GM10248 (cell line): ENCODE measurements at regions of chr4 and their contacts with region 1.

Region 1: GRCh38 chr4:1053080-1053661 is 41.7 kb downstream of the FGFRL1 start:
- DNase-seq: no peak
- CTCF ChIP-seq: no peak

Region 2: DNA sequence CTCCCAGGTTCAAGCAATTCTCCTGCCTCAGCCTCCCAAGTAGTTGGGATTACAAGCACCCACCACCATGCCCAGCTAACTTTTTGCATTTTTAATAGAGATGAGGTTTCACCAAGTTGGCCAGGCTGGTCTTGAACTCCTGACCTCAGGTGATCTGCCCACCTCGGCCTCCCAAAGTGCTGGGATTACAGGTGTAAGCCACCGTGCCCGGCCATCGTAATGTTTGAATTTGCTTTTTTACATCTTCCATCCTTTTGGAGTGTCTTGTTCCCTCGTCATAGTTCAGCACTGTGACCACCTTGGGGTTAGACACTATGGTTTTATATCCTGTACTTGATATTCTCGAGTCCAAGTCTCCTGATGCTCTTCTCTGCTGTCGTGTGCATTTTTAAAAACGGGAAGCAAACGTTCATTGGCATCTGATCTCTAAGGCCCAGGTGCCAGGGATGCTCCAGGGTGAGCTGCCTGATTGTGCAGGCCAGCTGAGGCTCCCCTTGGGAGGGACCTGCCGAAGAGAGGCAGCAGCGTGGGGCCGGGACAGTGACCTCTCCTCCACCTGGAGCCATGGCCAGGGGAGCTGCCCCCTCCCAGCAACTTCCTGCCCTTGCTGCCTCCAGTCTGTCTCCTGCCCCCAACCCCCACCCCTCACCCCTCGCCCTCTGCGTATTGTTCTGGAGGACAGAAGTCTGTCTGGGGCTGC is 96.5 kb before region 1 on chr4:
- CTCF ChIA-PET with region 1: no interaction called
- POLR2A ChIA-PET with region 1: interaction called, 10 read pairs
- DNase-seq: no peak
- CTCF ChIP-seq: no peak

Region 3: GRCh38 chr4:1002131-1002630 is 51.0 kb before region 1 on chr4:
- CTCF ChIA-PET with region 1: no interaction called
- POLR2A ChIA-PET with region 1: no interaction called
- DNase-seq: no peak
- CTCF ChIP-seq: no peak

Region 4: DNA sequence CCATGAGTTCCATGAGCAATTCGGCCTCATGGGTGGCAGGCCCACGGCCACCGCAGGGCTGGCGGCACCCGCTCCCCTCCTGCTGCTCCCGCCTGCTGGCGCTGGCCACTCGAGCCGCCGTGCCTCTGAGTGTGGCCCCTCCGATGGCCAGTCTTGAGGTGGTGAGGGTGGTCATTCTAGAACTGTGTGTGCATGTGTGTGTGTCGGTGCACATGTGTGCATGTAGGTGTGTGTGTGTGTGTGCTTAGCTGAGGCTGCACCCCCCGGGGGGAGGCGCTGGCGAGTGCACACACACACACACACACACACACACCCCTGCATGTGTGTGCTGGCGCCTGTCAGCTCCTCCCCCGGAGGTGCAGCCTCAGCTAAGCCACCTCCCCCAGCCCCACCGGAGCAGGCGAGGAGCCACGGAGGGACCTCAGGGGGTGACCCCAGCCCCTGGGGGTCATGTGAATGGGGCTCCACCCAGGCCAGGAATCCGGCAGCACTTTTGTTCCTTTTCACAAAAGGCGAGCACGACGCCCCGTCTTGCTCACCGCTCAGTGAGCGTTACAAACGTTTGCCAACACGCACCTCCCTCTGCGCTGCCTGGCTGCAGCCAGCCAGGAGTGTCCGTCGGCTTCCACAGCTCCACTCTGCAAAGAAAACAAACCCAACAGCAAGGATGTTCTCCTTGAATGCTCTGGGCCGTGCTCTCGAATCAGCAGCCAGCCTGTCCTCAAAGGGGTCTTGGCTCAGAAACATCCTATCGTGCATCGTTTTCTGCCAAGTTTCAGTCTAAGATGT is 11.8 kb before region 1 on chr4:
- CTCF ChIA-PET with region 1: no interaction called
- POLR2A ChIA-PET with region 1: no interaction called
- DNase-seq: no peak
- CTCF ChIP-seq: no peak